Common myeloid progenitor, CD34-positive (primary cell): ENCODE measurements at regions of chr7 and their contacts with region 1.

Region 1: DNA sequence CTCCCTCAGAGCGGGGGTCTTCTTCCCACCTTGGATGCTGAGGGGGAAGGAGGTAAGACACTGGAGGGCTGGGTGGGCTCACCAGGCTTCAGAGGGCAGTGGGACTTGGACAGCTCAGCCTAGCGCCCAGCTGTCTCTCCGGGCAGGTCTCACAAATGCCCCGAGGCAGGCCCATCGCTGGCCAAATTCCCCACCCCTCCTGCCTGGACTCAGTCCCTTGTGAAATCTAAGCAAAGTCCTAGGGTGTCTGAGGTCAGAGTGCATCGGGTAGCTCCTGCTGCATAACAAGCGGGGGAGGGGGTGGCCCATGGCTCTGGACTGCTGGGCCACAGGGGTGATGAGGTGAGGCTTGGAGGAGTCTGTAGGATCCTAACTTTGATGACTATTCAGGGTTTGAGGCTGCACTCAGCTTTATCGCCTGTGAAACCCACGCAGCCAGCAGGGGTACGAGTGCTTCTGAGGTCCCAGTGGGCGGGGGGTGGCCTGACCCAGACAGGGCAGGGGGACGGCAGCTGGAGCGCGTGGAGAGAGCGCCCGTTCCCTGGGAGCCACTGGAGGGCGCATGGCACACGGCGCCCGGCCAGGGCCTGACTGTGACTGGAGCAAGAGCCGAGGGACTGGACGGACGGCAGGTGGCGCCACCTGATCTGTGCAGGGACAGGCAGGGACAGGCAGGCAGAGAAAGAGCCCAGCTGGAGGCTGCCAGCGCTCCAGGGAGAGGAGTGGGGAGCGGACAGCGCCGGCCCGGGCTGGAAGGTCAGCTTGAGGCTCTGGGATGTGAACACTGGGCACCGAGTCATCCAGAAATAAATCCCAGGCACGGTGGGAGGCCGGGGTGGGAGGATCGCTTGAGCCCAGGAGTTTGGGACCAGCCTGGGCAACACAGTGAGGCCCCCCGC is 10.0 kb downstream of the CYP2W1 start:
- DNase-seq: peak; percentile 95 to 97 (median 97)
- H3K4me3 ChIP-seq: no peak overlapping the region
- H3K27ac ChIP-seq: no peak overlapping the region
- H3K4me1 ChIP-seq: peaks cover 0 to 36% (median 26%) of the 10 kb centered on the region in 4 experiments
- H3K27me3 ChIP-seq: peaks cover 0 to 11% (median 0%) of the 10 kb centered on the region in 5 experiments

Region 2: DNA sequence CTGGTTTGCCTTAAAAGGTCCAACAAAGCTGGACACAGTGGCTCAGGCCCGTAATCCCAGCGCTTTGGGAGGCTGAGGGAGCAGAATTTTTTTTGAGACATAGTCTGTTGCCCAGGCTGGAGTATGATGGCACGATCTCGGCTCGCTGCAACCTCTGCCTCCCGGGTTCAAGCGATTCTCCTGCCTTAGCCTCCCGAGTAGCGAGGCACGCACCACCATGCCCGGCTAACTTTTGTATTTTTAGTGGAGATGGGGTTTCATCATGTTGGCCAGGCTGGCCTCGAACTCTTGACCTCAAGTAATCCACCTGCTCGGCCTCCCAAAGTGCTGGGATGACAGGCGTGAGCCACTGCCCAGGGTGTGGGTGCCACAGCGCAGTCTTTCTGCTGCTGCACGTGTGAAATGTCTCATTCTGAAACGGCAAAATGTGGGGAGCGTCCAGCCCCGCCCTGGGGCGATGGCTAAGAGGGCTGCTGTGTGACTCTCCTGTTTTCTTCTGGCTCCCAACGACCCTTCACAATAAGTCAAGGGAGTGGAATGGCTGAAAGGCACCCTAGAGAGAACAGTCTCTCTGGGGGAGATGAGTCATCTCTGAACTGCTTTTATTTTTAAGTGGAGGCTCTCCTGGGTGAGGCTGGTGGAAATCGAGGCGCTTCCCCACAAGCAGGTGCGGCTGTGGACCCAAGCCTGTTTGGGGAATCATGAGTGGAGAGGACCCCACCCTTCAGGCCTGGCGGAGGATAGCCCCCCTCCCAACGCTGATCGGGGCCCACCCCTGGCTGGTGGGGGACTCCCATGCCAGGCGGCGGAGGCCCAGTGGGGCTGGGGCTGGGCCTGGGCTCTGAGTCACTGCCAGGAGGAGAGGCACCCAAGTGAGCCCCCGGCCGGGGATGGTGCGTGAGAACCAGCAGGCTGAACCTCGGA is 56.6 kb before region 1 on chr7:
- CTCF ChIA-PET with region 1: no interaction called
- POLR2A ChIA-PET with region 1: no interaction called
- DNase-seq: peak in 2 of 3 donors; percentile 36 to 54
- H3K4me3 ChIP-seq: no peak overlapping the region
- H3K27ac ChIP-seq: no peak overlapping the region
- H3K4me1 ChIP-seq: peaks cover 0 to 2% (median 0%) of the 10 kb centered on the region in 4 experiments
- H3K27me3 ChIP-seq: no peaks in the 10 kb centered on the region

Region 3: DNA sequence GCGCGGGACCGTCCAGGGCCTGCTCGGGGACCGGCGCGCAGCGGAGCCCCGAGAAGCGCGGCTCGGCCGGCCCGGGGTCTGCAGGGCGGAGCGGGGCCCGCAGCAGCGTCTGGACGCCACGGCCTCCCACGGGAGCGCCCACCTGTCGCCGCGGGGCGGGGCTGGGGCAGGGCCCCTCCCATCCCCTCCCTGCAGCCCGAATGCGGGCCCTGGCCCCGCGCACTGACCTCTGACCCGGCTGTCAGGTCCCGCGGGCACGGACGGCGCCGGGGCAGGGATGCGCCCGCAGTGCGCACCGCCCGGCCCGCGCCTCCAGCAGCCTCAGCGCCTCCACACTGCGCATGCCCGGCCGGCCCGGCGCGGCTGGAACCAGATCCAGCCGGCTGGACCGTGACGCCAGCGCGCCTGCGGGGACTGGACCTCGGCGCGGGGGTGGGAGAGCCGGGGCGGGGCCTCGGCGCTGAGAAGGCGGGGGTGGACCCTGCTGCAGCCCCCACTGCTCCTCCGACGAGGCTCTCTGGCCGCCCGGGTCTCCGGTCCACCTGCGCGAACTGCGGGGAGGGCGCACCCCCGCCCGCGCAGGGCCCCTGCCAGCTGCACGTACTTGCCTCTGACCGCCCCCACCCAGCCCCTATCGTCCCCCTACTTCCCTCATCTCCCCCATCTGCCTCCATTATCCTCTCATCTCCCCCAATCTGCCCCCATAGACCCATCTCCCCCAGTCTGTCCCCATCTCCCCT is 35.2 kb after region 1 on chr7:
- CTCF ChIA-PET with region 1: interaction called, 33 read pairs
- POLR2A ChIA-PET with region 1: no interaction called
- DNase-seq: peak in 2 of 3 donors; percentile 71
- H3K4me3 ChIP-seq: peak overlapping the region; percentile 39 to 76 (median 71)
- H3K27ac ChIP-seq: peak overlapping the region in 1 of 2 experiments; percentile 64
- H3K4me1 ChIP-seq: peaks cover 0 to 64% (median 37%) of the 10 kb centered on the region in 4 experiments
- H3K27me3 ChIP-seq: no peaks in the 10 kb centered on the region

Region 4: DNA sequence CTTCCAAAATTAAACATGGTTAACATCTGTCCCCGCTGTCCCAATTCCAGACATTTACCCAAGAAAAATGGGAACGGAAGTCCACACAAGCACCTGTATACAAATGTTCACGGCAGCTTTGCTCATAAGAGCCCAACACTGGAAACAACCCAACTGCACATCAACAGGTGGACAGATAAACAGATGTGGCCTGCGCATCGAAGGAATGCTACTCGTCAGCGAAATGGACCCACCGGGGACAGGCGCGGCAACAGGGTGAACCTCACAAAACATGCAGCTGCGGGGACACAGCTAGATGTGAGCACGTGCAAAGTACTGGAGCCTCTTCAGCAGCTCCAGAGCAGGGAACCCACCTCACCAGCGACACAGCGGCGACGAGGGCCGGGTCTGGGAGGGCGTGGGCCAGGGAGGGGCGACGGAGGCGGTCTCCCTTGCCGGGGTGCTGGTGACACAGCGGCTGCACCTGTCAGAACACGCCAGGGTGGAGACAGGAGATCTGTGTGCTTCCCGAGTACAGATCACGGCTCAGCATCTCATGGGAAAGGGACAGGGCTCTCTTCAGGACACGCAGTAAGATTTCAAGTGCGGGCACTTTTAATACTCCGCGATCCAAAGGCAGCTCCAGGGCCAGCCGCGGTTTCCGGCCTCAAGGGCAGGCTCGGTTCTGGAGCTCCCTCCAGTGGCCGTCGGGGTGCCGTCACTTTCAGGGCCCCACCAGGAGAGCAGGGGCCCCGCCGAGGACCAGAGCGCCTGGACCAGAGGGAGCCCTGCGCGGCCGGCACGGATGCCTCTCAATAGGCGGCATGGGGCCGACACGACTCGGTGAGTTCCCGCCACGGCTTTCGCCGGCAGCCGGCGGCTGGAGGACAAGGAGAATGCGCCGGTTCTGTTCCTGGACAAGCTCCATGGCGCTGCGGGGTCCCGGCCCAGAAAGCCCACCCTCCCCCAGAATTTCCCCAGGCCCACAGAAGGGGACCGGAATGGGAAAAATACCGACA is 72.6 kb after region 1 on chr7:
- CTCF ChIA-PET with region 1: interaction called, 160 read pairs
- POLR2A ChIA-PET with region 1: interaction called, 8 read pairs
- DNase-seq: peak; percentile 66 to 85 (median 83)
- H3K4me3 ChIP-seq: peak overlapping the region in 5 of 7 experiments; percentile 37 to 77 (median 44)
- H3K27ac ChIP-seq: no peak overlapping the region
- H3K4me1 ChIP-seq: peaks cover 0 to 38% (median 36%) of the 10 kb centered on the region in 4 experiments
- H3K27me3 ChIP-seq: no peaks in the 10 kb centered on the region

Region 5: GRCh38 chr7:1086588-1087464 is 93.9 kb after region 1 on chr7:
- CTCF ChIA-PET with region 1: interaction called, 10 read pairs
- POLR2A ChIA-PET with region 1: no interaction called
- DNase-seq: peak; percentile 58 to 76 (median 76)
- H3K4me3 ChIP-seq: peak overlapping the region in 5 of 7 experiments; percentile 8 to 78 (median 53)
- H3K27ac ChIP-seq: no peak overlapping the region
- H3K4me1 ChIP-seq: peaks cover 0 to 18% (median 8%) of the 10 kb centered on the region in 4 experiments
- H3K27me3 ChIP-seq: no peaks in the 10 kb centered on the region

Region 6: DNA sequence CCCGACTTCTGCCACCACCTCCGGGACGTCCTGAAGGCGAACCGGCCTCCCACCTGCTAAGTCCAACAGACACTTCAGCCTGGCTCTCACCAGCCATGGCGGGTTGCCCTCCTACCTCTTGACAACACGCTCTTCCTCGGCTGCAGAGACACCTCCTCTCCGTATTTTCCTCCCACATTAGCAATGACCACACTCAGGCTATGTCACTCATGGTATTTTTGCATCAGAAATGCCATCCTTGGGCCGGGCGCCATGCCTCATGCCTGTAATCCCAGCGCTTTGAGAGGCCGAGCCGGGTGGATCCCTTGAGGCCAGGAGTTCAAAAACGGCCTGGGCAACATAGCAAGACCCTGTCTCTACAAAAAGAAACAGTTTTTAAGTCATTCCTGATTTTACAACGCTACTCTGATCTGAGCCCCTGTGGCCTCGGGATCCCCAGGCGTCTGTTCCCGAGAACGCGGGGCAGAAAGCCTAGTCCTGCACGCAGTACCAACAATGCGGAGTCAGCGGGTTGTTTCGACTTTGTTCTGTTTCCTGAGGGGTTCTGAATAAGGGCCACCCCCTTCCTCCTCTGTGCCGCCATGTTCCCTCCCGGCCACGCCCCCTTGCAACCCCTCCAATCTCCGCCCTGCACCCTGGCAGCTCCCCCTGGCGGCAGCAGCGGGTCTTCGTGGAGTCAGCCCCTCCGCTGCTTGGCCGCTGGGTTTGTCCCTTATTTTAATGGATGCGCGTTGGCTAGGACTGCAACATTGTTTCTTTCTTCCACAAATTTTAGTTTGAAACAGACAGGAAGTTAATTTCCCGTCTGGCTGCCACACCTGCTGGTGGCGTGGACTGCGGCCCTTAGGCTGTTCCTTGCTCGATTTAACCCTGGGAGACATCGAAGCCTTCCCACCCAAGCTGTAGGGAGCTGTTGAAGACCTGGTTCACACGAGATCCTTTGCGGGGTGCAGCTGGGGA is 176.7 kb after region 1 on chr7:
- CTCF ChIA-PET with region 1: interaction called, 11 read pairs
- POLR2A ChIA-PET with region 1: no interaction called
- DNase-seq: peak; percentile 91 to 96 (median 94)
- H3K4me3 ChIP-seq: peak overlapping the region in 6 of 7 experiments; percentile 21 to 85 (median 71)
- H3K27ac ChIP-seq: peak overlapping the region in 1 of 2 experiments; percentile 34
- H3K4me1 ChIP-seq: peaks cover 0 to 13% (median 10%) of the 10 kb centered on the region in 4 experiments
- H3K27me3 ChIP-seq: no peaks in the 10 kb centered on the region